ENCODE measurements at regions of chr4 and their contacts with region 1.

Region 1: GRCh38 chr4:169010125-169011023 is at the start of gene CBR4:
- DNase-seq: peak; percentile 97
- ATAC-seq: peak; percentile 99
- H3K4me3 Mint-ChIP-seq: peak within 1 kb of the TSS; percentile 84
- H3K27ac Mint-ChIP-seq: peak within 1 kb of the TSS; percentile 87
- H3K4me1 Mint-ChIP-seq: peaks cover 26% of the 10 kb centered on the region
- H3K27me3 Mint-ChIP-seq: no peaks in the 10 kb centered on the region
- total RNA-seq, gene CBR4: 14.4 to 23.7 TPM

Region 2: DNA sequence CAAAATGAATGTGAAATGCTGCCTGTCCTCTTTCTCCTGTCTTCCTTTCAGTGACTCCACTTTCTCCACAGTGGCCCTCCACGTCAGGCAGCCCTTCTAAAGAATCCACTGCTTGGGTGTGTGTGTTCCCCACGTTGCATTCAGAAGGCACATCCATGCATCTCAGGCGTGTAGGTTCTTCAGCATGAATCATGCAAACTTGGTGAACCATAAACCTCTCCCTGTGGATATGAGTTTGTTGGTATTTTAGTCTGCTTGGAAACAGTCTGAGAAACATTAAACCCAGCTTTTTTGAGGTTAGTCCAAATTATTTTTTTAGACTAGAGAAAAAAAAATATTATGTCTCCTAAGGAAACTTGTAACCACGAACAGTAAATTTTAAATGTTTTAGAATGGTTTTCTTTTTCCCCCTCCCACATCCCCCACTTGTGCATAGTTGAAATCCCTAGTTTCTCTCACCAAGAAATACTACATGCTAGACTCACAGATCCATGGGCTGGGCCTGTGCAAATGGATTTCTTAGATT is 252.0 kb before region 1 on chr4:
- CTCF ChIA-PET with region 1: no interaction called
- POLR2A ChIA-PET with region 1: no interaction called
- intact Hi-C with region 1: no loop called
- DNase-seq: no peak
- ATAC-seq: no peak
- H3K4me3 Mint-ChIP-seq: no peak overlapping the region
- H3K27ac Mint-ChIP-seq: no peak overlapping the region
- H3K4me1 Mint-ChIP-seq: peaks cover 8% of the 10 kb centered on the region
- H3K27me3 Mint-ChIP-seq: no peaks in the 10 kb centered on the region

Region 3: DNA sequence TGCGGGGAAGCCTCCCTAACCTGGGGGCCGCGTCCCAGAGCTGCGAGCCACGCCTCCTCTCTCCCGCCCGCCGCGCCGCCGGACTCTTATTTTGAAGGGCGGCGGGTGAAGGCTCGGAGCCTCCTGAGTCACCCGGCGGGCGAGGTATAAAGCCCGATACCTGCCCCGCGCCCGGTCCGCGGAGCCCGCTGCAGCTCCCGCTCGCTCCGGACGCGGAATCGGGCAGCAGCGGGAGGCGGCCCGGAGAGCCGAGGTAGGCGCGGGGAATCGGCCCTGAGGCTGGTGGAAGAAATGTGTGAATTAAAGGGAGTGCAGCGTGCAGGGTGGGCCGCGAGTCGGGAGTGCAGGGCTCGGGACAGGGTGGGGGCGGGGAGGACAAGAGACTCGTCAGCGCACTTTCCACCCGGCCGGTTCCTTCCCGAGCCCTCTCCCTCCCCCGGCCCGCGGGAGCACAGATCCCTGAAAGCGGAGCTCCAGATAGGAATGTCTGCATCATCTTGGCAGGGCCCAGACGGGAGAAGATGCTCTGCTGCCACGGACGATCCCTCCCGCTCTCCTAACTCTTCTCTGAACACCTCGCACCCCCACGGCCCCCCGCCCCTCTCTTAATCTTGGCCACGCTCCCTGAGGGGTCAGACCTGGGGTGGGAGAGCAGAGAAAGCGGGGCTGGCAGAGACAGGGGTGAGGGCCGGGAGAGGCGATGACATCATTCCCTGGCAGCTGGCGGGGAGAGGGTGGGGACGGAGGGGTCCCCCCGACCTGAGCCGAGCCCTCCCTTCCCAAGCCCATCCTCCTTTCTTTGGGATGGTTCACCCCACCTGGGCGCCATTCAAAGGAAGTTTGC is 178.2 kb before region 1 on chr4:
- CTCF ChIA-PET with region 1: interaction called, 4 read pairs
- POLR2A ChIA-PET with region 1: no interaction called
- intact Hi-C with region 1: loop called in 1 of 2 experiments (anchors 5 kb)
- DNase-seq: peak; percentile 83
- ATAC-seq: peak; percentile 92
- H3K4me3 Mint-ChIP-seq: peak overlapping the region; percentile 72
- H3K27ac Mint-ChIP-seq: peak overlapping the region; percentile 48
- H3K4me1 Mint-ChIP-seq: peaks cover 15% of the 10 kb centered on the region
- H3K27me3 Mint-ChIP-seq: peaks cover 37% of the 10 kb centered on the region

Region 4: GRCh38 chr4:169270810-169271691 is 260.7 kb after region 1 on chr4 and contains the start of gene SH3RF1:
- CTCF ChIA-PET with region 1: no interaction called
- POLR2A ChIA-PET with region 1: interaction called, 3 read pairs
- intact Hi-C with region 1: loop called (anchors 2 to 10 kb)
- DNase-seq: peak; percentile 59
- ATAC-seq: peak; percentile 64
- H3K4me3 Mint-ChIP-seq: peak within 1 kb of the TSS; percentile 70
- H3K27ac Mint-ChIP-seq: no peak within 1 kb of the TSS
- H3K4me1 Mint-ChIP-seq: peaks cover 4% of the 10 kb centered on the region
- H3K27me3 Mint-ChIP-seq: peaks cover 56% of the 10 kb centered on the region
- total RNA-seq, gene SH3RF1: 0.39 to 0.63 TPM

Region 5: GRCh38 chr4:169566021-169566818 is 555.8 kb after region 1 on chr4:
- CTCF ChIA-PET with region 1: no interaction called
- POLR2A ChIA-PET with region 1: no interaction called
- intact Hi-C with region 1: loop called in 1 of 2 experiments (anchors 10 kb)
- DNase-seq: peak; percentile 35
- ATAC-seq: no peak
- H3K4me3 Mint-ChIP-seq: no peak overlapping the region
- H3K27ac Mint-ChIP-seq: peak overlapping the region; percentile 73
- H3K4me1 Mint-ChIP-seq: peaks cover 5% of the 10 kb centered on the region
- H3K27me3 Mint-ChIP-seq: no peaks in the 10 kb centered on the region

Region 6: DNA sequence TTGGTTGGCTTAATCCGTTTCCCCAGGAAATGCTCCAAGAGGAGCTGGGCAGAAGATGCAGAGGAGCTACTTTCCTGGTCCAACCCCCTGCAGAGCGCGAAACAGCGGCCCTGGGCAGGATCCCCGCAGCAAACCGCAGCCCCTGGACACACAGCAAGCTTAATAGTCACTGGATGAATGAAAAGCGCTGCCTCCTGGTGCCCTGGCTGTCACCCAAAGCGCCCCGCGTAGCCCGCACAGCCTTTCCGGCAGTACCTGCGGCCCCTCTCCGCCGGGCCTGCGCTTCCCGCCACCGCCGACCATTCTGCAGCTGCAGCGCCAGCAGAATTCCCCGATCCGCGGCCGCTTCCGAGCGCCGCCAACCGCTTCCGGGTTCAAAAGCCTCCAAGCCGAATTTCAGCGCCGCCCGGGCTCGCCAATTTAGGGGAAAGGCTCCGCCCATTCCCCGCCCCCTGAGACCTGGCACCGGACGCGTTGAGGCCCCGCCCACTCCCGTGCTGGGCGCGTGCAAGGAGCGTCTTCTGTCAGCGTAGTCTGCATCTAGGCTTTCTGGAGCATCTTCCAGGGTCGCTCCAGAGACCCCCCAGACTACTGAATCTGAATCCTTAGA is 747.3 kb after region 1 on chr4 and contains the start of gene HPF1:
- CTCF ChIA-PET with region 1: no interaction called
- POLR2A ChIA-PET with region 1: no interaction called
- intact Hi-C with region 1: loop called in 1 of 2 experiments (anchors 1 kb)
- DNase-seq: peak; percentile 97
- ATAC-seq: peak; percentile 94
- H3K4me3 Mint-ChIP-seq: peak within 1 kb of the TSS; percentile 82
- H3K27ac Mint-ChIP-seq: peak within 1 kb of the TSS; percentile 68
- H3K4me1 Mint-ChIP-seq: peaks cover 15% of the 10 kb centered on the region
- H3K27me3 Mint-ChIP-seq: peaks cover under 1% of the 10 kb centered on the region
- total RNA-seq, gene HPF1: 29.8 to 34.7 TPM

Measured in activated CD4-positive, alpha-beta T cell treated with anti-CD3 and anti-CD28 coated beads for 36 hours (primary cell).